Endothelial cell of umbilical vein (primary cell): ENCODE measurements at regions of chr20 and their contacts with region 1.

Region 1: GRCh38 chr20:50575847-50576720 is 65.9 kb downstream of the PTPN1 start:
- DNase-seq: peak; percentile 61
- H3K4me3 ChIP-seq: no peak overlapping the region
- H3K27ac ChIP-seq: no peak overlapping the region
- H3K4me1 ChIP-seq: peaks cover 28% of the 10 kb centered on the region
- H3K27me3 ChIP-seq: no peaks in the 10 kb centered on the region
- CTCF ChIP-seq: peak; percentile 81 to 82
- POLR2A ChIP-seq: no peak

Region 2: GRCh38 chr20:50379049-50379990 is 196.8 kb before region 1 on chr20:
- CTCF ChIA-PET with region 1: no interaction called
- POLR2A ChIA-PET with region 1: no interaction called
- dilution Hi-C with region 1: no loop called
- intact Hi-C with region 1: loop called (anchors 5 kb)
- DNase-seq: peak; percentile 78
- H3K4me3 ChIP-seq: no peak overlapping the region
- H3K27ac ChIP-seq: no peak overlapping the region
- H3K4me1 ChIP-seq: peaks cover 24% of the 10 kb centered on the region
- H3K27me3 ChIP-seq: peaks cover 0 to 5% of the 10 kb centered on the region in 2 experiments
- CTCF ChIP-seq: no peak
- POLR2A ChIP-seq: no peak

Region 3: DNA sequence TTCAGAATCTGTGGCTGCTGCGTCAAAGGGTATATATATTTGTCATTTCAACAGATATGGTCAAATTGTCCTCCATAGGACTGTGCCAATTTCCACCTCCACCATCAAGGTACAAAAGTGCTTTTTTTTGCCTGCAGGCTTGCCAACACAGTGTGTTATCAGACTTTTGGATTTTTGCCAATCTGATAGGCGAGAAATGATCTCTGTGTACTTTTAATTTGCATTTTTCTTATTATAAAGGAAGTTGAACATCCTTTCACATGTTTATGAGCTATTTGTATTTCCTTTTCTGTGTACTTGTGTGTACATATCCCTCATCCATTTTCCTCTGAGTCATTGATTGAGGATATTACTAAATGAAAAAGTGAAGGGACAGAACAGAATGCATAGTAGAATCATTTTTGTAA is 104.9 kb before region 1 on chr20:
- CTCF ChIA-PET with region 1: interaction called, 28 read pairs
- POLR2A ChIA-PET with region 1: interaction called, 5 read pairs
- dilution Hi-C with region 1: no loop called
- intact Hi-C with region 1: no loop called
- DNase-seq: peak; percentile 78
- H3K4me3 ChIP-seq: no peak overlapping the region
- H3K27ac ChIP-seq: peak overlapping the region; percentile 30
- H3K4me1 ChIP-seq: peaks cover 34% of the 10 kb centered on the region
- H3K27me3 ChIP-seq: no peaks in the 10 kb centered on the region
- CTCF ChIP-seq: no peak
- POLR2A ChIP-seq: no peak

Region 4: DNA sequence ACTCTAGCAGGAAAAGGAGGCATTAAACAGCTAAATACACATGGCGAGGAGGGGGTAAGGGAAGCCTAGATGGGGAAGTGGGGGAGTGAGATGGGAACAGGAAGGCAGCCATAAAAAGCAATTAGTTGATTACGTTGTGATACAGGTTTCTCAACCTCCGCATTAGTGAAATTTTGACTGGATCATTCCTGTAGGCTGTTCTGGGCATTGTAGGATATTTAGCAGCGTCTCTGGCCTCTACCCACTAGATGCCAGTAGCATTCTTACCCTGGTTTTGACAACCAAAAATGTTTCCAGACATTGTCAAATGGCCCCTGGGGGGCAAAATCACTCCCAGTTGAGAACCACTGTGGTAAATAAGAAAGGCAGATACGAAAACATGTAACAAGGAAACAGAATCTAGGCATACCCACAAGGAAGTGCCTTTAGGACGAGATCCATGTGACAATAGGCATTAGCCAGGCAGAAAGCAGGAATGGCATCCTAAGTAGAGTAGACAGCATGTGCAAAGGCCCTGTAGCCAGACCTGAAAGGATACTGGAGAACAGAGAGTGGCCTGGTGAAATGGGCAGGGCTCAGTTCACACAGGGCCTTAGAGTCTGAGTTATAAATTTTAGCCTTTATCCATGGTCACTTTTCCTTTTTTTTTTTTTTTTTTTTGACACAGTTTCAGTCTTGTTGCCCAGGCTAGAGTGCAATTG is 91.7 kb before region 1 on chr20:
- CTCF ChIA-PET with region 1: interaction called, 22 read pairs
- POLR2A ChIA-PET with region 1: no interaction called
- dilution Hi-C with region 1: no loop called
- intact Hi-C with region 1: no loop called
- DNase-seq: no peak
- H3K4me3 ChIP-seq: peak overlapping the region in 1 of 3 experiments; percentile 59
- H3K27ac ChIP-seq: peak overlapping the region; percentile 72
- H3K4me1 ChIP-seq: peaks cover 12% of the 10 kb centered on the region
- H3K27me3 ChIP-seq: no peaks in the 10 kb centered on the region
- CTCF ChIP-seq: no peak
- POLR2A ChIP-seq: no peak

Region 5: GRCh38 chr20:50509935-50510705 is 66.0 kb before region 1 on chr20 and contains the start of gene PTPN1:
- CTCF ChIA-PET with region 1: interaction called, 133 read pairs
- POLR2A ChIA-PET with region 1: interaction called, 17 read pairs
- dilution Hi-C with region 1: no loop called
- intact Hi-C with region 1: loop called (anchors 1 kb)
- DNase-seq: peak; percentile 99
- H3K4me3 ChIP-seq: peak within 1 kb of the TSS; percentile 35 to 97 (median 88)
- H3K27ac ChIP-seq: peak within 1 kb of the TSS; percentile 97
- H3K4me1 ChIP-seq: peaks cover 31% of the 10 kb centered on the region
- H3K27me3 ChIP-seq: no peaks in the 10 kb centered on the region
- CTCF ChIP-seq: peak in 1 of 2 donors; percentile 2
- POLR2A ChIP-seq: peak; percentile 99
- total RNA-seq, gene PTPN1: 57.7 and 64.3 TPM in 2 replicates

Region 6: GRCh38 chr20:50561379-50562078 is 14.6 kb before region 1 on chr20:
- CTCF ChIA-PET with region 1: interaction called, 25 read pairs
- POLR2A ChIA-PET with region 1: no interaction called
- dilution Hi-C with region 1: no loop called
- intact Hi-C with region 1: no loop called
- DNase-seq: peak; percentile 97
- H3K4me3 ChIP-seq: peak overlapping the region in 1 of 3 experiments; percentile 3
- H3K27ac ChIP-seq: peak overlapping the region; percentile 84
- H3K4me1 ChIP-seq: peaks cover 47% of the 10 kb centered on the region
- H3K27me3 ChIP-seq: no peaks in the 10 kb centered on the region
- CTCF ChIP-seq: no peak
- POLR2A ChIP-seq: no peak